T-cell (primary cell): ENCODE measurements at regions of chr4 and their contacts with region 1.

Region 1: GRCh38 chr4:81621490-81621889 is 149.8 kb upstream of the RASGEF1B start:
- DNase-seq: no peak
- ATAC-seq: no peak
- H3K4me3 ChIP-seq: no peak overlapping the region
- H3K4me3 Mint-ChIP-seq: no peak overlapping the region
- H3K27ac ChIP-seq: no peak overlapping the region
- H3K27ac Mint-ChIP-seq: no peak overlapping the region
- H3K4me1 ChIP-seq: no peaks in the 10 kb centered on the region
- H3K4me1 Mint-ChIP-seq: peaks cover 0 to 2% (median 0%) of the 10 kb centered on the region in 3 donors
- H3K27me3 ChIP-seq: no peaks in the 10 kb centered on the region
- H3K27me3 Mint-ChIP-seq: no peaks in the 10 kb centered on the region

Region 2: DNA sequence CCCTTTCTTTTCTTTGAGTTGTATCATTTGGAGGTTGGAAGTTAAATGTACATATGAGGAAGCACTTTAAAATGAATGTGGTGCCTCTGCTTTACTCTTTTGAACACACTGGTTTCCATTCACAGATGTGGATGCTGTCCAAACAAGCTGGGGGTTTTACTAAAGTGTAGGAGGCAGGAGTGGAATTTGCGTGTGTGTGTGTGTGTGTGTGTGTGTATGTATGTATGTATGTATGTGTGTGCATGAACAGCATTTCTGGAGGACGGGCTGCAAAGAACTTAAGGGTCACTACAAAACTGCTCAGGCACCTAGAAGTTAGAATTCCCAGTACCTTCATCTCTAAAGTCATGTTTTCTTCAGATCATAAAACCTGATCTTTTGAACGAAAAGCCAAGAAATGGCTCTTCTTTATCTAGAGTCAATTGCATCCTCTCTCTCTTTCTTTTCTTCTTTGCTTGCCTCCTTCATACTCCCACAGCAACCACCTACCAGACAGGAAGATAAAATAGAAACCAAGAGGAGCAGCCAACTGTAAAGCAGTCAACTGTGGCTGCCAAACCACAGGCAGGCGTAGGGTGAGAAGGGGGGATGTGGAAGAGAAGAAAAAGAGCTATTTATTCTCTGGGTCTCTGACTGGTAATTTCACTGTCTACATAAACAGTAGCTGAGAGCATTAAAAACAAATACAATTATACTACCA is 27.2 kb after region 1 on chr4:
- CTCF ChIA-PET with region 1: no interaction called
- POLR2A ChIA-PET with region 1: interaction called in 1 of 2 experiments, 10 read pairs
- DNase-seq: peak; percentile 6 to 59 (median 33)
- ATAC-seq: peak; percentile 82 to 100 (median 92)
- H3K4me3 ChIP-seq: peak overlapping the region in 1 of 2 donors; percentile 38
- H3K4me3 Mint-ChIP-seq: peak overlapping the region in 1 of 3 donors; percentile 6
- H3K27ac ChIP-seq: no peak overlapping the region
- H3K27ac Mint-ChIP-seq: peak overlapping the region; percentile 1 to 71
- H3K4me1 ChIP-seq: peaks cover 13 to 60% of the 10 kb centered on the region in 2 experiments
- H3K4me1 Mint-ChIP-seq: peaks cover 40 to 45% (median 41%) of the 10 kb centered on the region in 3 donors
- H3K27me3 ChIP-seq: no peaks in the 10 kb centered on the region
- H3K27me3 Mint-ChIP-seq: no peaks in the 10 kb centered on the region